ENCODE measurements at regions of chr17 and their contacts with region 1.

Region 1: GRCh38 chr17:15007147-15007553 is 258.0 kb downstream of the PMP22 start:
- DNase-seq: no peak

Region 2: GRCh38 chr17:13036751-13037150 is 1970.4 kb before region 1 on chr17:
- intact Hi-C with region 1: loop called (anchors 5 kb)
- DNase-seq: no peak

Region 3: DNA sequence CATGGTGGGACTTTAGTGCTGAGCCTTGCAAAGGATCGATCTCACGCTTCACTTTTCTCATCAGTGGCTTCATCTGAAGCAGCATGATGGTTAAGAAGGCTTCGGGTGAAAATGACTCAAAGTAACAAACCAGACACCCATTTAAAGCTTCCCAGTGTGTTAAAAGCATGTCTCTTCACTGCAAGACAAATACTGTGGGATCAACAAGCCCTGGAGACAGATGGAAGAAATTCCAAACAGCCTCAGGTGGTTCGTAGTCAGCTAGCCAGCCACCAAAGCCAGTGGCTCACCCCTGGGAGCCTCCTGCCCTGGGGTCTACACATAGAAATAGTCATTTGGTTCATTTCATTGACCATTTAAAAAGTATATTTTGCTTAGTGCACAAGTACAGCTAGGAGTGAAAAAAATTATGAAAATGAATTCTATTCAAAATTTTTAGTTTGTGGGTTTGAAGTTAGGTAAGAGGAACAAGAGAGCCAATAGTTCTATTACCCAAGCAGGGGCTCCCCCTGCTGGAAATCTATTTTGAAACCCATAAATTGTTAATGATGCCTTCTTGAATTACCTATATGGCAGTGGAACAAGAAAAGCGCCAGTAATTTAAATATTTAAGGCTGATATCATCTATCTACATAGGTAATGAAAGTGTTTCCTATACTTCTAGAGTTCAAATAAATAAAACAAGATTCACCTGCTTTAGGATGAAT is 206.4 kb after region 1 on chr17:
- intact Hi-C with region 1: no loop called
- DNase-seq: peak in 3 of 42 donors; percentile 20 to 61 (median 21)

Measured in head of caudate nucleus (tissue), 42 donors.